ENCODE measurements at regions of chr12 and their contacts with region 1.

Region 1: GRCh38 chr12:6723607-6724396 is at the start of gene COPS7A:
- DNase-seq: peak; percentile 98
- ATAC-seq: peak; percentile 89
- H3K4me3 ChIP-seq: peak within 1 kb of the TSS; percentile 53 to 65 (median 63)
- H3K4me3 Mint-ChIP-seq: peak within 1 kb of the TSS; percentile 91
- H3K27ac ChIP-seq: peak within 1 kb of the TSS; percentile 81 to 86
- H3K27ac Mint-ChIP-seq: peak within 1 kb of the TSS; percentile 94
- H3K4me1 ChIP-seq: peaks cover 13 to 17% of the 10 kb centered on the region in 2 donors
- H3K4me1 Mint-ChIP-seq: peaks cover 19% of the 10 kb centered on the region
- H3K27me3 ChIP-seq: no peaks in the 10 kb centered on the region
- H3K27me3 Mint-ChIP-seq: no peaks in the 10 kb centered on the region
- CTCF ChIP-seq: no peak
- total RNA-seq, gene COPS7A: 28.3 and 29.4 TPM in 2 replicates

Region 2: GRCh38 chr12:6607751-6608591 is 115.8 kb before region 1 on chr12:
- CTCF ChIA-PET with region 1: no interaction called
- POLR2A ChIA-PET with region 1: interaction called, 5 read pairs
- intact Hi-C with region 1: loop called (anchors 1 kb)
- DNase-seq: peak; percentile 90
- ATAC-seq: peak; percentile 20
- H3K4me3 ChIP-seq: no peak overlapping the region
- H3K4me3 Mint-ChIP-seq: no peak overlapping the region
- H3K27ac ChIP-seq: peak overlapping the region; percentile 90 to 95
- H3K27ac Mint-ChIP-seq: no peak overlapping the region
- H3K4me1 ChIP-seq: peaks cover 56 to 63% of the 10 kb centered on the region in 2 donors
- H3K4me1 Mint-ChIP-seq: peaks cover 58% of the 10 kb centered on the region
- H3K27me3 ChIP-seq: no peaks in the 10 kb centered on the region
- H3K27me3 Mint-ChIP-seq: no peaks in the 10 kb centered on the region
- CTCF ChIP-seq: no peak

Region 3: DNA sequence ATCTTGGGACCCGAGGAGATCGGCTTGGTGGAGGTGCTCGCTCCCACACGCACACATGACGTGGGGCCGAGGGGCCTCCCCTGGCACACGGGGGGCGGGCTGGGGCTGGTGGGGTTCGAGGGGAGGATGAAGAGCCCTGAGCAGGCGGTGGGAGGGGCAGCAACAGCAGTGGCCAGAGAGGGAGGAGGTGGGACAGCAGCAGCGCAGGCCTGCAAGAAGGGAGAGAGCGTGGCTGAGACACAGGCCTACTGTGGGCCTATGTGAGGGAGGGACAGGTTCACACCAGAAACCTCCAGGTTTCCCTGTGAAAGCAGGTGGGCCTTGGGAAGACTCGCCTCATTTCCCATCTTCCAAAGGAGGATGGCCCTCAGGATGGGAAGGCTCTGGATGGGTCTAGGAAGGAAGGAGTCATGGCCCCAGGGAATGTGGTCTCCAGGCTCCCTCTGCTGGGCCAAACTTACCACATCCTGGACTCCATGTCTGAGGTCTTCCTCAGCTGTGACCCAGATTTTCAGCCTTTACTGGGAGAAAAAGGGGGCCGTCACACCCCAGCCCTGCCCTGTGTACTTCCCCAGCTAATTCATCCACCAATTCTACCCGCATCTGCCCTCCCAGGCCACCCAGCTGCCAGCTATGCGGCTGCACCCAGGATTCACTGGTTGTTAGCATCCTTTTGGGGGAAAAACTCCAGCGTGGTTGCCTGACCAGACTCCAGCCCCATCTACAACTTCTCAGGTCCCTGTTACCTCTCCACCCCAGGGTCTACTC is 26.0 kb before region 1 on chr12:
- CTCF ChIA-PET with region 1: interaction called, 7 read pairs
- POLR2A ChIA-PET with region 1: interaction called, 13 read pairs
- intact Hi-C with region 1: loop called (anchors 2 kb)
- DNase-seq: peak; percentile 52
- ATAC-seq: no peak
- H3K4me3 ChIP-seq: peak overlapping the region in 1 of 5 experiments; percentile 6
- H3K4me3 Mint-ChIP-seq: peak overlapping the region; percentile 61
- H3K27ac ChIP-seq: peak overlapping the region in 1 of 2 donors; percentile 58
- H3K27ac Mint-ChIP-seq: peak overlapping the region; percentile 83
- H3K4me1 ChIP-seq: peaks cover 51 to 55% of the 10 kb centered on the region in 2 donors
- H3K4me1 Mint-ChIP-seq: peaks cover 60% of the 10 kb centered on the region
- H3K27me3 ChIP-seq: peaks cover 4 to 24% (median 15%) of the 10 kb centered on the region in 4 experiments
- H3K27me3 Mint-ChIP-seq: peaks cover 13% of the 10 kb centered on the region
- CTCF ChIP-seq: peak; percentile 28

Region 4: GRCh38 chr12:6764011-6764828 is 40.4 kb after region 1 on chr12:
- CTCF ChIA-PET with region 1: interaction called, 10 read pairs
- POLR2A ChIA-PET with region 1: interaction called, 3 read pairs
- intact Hi-C with region 1: no loop called
- DNase-seq: peak; percentile 80
- ATAC-seq: peak; percentile 72
- H3K4me3 ChIP-seq: peak overlapping the region in 1 of 5 experiments; percentile 14
- H3K4me3 Mint-ChIP-seq: peak overlapping the region; percentile 61
- H3K27ac ChIP-seq: no peak overlapping the region
- H3K27ac Mint-ChIP-seq: peak overlapping the region; percentile 28
- H3K4me1 ChIP-seq: peaks cover 33 to 36% of the 10 kb centered on the region in 2 donors
- H3K4me1 Mint-ChIP-seq: peaks cover 29% of the 10 kb centered on the region
- H3K27me3 ChIP-seq: peaks cover 0 to 44% (median 27%) of the 10 kb centered on the region in 4 experiments
- H3K27me3 Mint-ChIP-seq: peaks cover 43% of the 10 kb centered on the region
- CTCF ChIP-seq: no peak